ENCODE measurements at regions of chr15 and their contacts with region 1.

Region 1: GRCh38 chr15:98668566-98669308 is 20.4 kb downstream of the IGF1R start:
- DNase-seq: peak; percentile 43
- H3K4me3 Mint-ChIP-seq: peak overlapping the region; percentile 18
- H3K27ac Mint-ChIP-seq: peak overlapping the region; percentile 19
- H3K4me1 Mint-ChIP-seq: peaks cover 54% of the 10 kb centered on the region
- H3K27me3 Mint-ChIP-seq: no peaks in the 10 kb centered on the region

Region 2: DNA sequence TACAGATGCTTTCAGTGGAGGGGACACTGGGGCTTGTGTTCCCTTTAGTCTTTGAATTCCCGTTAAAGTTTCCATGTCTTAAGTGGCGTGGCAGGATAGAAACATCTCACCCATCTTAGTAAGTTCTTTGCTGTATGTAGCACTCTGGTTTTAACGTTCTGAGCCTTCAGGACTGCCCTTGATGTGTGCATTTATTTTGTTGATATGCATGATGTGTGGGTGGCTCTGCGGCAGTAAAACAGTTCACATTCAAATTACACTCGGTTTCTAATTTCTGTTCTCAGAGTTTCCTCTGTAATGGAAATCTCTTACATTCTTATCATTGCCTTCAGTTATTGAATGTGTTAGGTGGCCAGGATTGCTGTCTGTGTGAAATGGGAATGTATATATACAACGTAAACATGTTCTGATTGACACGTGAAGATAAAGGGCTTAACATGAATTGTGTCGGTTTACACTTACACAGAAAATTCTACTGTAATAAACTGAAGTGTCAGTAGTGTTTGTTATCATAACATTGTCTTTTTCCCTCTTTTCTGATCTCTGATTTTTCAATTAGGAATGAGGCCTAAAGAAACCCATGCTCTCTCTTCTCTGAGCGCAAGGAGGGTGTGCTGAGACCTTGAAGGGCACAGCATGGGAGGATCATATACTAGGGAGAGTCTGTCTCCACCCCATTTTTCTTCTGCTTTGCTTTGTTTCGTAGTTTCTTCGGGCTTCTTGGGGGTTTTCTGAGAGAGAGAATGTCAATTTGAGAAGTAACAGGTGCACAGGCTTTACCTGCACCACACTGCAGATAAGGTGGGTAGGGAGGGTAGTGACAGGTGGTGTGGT is 31.1 kb after region 1 on chr15:
- intact Hi-C with region 1: loop called (anchors 2 kb)
- DNase-seq: no peak
- H3K4me3 Mint-ChIP-seq: no peak overlapping the region
- H3K27ac Mint-ChIP-seq: peak overlapping the region; percentile 49
- H3K4me1 Mint-ChIP-seq: peaks cover 43% of the 10 kb centered on the region
- H3K27me3 Mint-ChIP-seq: no peaks in the 10 kb centered on the region

Region 3: GRCh38 chr15:98779463-98780071 is 110.8 kb after region 1 on chr15:
- intact Hi-C with region 1: loop called (anchors 5 kb)
- DNase-seq: peak; percentile 51
- H3K4me3 Mint-ChIP-seq: no peak overlapping the region
- H3K27ac Mint-ChIP-seq: no peak overlapping the region
- H3K4me1 Mint-ChIP-seq: peaks cover 29% of the 10 kb centered on the region
- H3K27me3 Mint-ChIP-seq: peaks cover 2% of the 10 kb centered on the region

Measured in activated T-helper 2 cell treated with anti-CD3 and anti-CD28 coated beads, Interferon-gamma antibody, Interleukin-2, Interleukin-4, amounts not matched to agents 10 μg/mL and 5 μg/mL and 100 μg/mL, durations not matched to agents 14 hours and 24 hours and 36 hours (primary cell).